Activated CD8-positive, alpha-beta T cell treated with anti-CD3 and anti-CD28 coated beads for 36 hours (primary cell): ENCODE measurements at regions of chr4 and their contacts with region 1.

Region 1: DNA sequence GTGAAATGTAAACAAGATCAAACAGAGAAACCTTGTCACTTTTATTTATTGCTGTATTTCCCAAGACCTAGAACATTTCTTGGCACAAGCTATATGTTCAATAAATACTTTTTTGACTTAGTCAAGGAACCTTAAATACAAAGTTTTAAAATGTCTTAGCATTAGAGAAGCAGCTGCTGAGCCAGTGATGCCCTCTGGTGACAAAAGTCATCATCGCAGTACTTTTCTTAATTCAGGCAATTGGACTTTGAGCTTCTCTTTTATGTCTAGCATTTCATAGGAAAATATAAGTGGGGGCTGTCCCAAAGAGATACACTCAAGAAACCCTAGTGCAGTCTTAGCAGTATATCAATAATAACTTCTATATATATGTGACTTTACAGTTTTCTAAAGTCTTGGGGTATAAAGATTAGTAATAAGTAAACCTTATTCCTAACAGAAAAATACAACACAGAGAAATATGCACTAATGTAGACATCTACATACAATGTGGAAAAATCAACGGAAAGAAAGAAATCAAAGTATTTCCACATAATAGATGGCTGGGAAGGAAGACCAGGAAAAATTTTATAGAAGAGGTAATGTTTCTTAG is 118.4 kb downstream of the DTHD1 start:
- DNase-seq: peak; percentile 74
- ATAC-seq: peak; percentile 76
- H3K4me3 Mint-ChIP-seq: no peak overlapping the region
- H3K27ac Mint-ChIP-seq: no peak overlapping the region
- H3K4me1 Mint-ChIP-seq: peaks cover 9% of the 10 kb centered on the region
- H3K27me3 Mint-ChIP-seq: peaks cover 5% of the 10 kb centered on the region
- CTCF ChIP-seq: peak; percentile 88

Region 2: GRCh38 chr4:36255577-36255976 is 144.3 kb before region 1 on chr4:
- CTCF ChIA-PET with region 1: interaction called, 23 read pairs
- POLR2A ChIA-PET with region 1: no interaction called
- intact Hi-C with region 1: no loop called
- DNase-seq: peak; percentile 81
- ATAC-seq: peak; percentile 80
- H3K4me3 Mint-ChIP-seq: peak overlapping the region; percentile 66
- H3K27ac Mint-ChIP-seq: peak overlapping the region; percentile 94
- H3K4me1 Mint-ChIP-seq: peaks cover 46% of the 10 kb centered on the region
- H3K27me3 Mint-ChIP-seq: no peaks in the 10 kb centered on the region
- CTCF ChIP-seq: no peak

Region 3: GRCh38 chr4:36343501-36344175 is 56.2 kb before region 1 on chr4:
- CTCF ChIA-PET with region 1: interaction called, 86 read pairs
- POLR2A ChIA-PET with region 1: interaction called, 5 read pairs
- intact Hi-C with region 1: no loop called
- DNase-seq: no peak
- ATAC-seq: no peak
- H3K4me3 Mint-ChIP-seq: no peak overlapping the region
- H3K27ac Mint-ChIP-seq: no peak overlapping the region
- H3K4me1 Mint-ChIP-seq: peaks cover 6% of the 10 kb centered on the region
- H3K27me3 Mint-ChIP-seq: no peaks in the 10 kb centered on the region
- CTCF ChIP-seq: no peak

Region 4: DNA sequence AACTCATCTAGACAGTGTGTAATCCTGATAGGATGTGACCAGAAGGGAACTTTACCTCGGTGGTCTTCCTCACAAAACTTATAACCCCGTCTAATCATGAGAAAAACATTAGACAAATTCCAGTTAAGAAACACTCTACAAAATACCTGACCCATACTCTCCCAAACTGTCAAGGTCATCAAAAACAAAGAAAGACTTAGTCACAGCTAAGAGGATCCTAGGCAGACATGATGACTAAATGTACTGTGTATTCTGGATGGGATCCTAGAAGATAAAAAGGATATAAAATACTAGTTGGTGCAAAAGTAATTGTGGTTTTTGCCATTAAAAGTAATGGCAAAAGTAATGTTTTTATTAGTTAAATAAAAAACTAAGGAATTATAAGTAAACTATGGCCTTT is 36.8 kb before region 1 on chr4:
- CTCF ChIA-PET with region 1: interaction called, 59 read pairs
- POLR2A ChIA-PET with region 1: no interaction called
- intact Hi-C with region 1: no loop called
- DNase-seq: no peak
- ATAC-seq: no peak
- H3K4me3 Mint-ChIP-seq: no peak overlapping the region
- H3K27ac Mint-ChIP-seq: no peak overlapping the region
- H3K4me1 Mint-ChIP-seq: no peaks in the 10 kb centered on the region
- H3K27me3 Mint-ChIP-seq: no peaks in the 10 kb centered on the region
- CTCF ChIP-seq: no peak

Region 5: DNA sequence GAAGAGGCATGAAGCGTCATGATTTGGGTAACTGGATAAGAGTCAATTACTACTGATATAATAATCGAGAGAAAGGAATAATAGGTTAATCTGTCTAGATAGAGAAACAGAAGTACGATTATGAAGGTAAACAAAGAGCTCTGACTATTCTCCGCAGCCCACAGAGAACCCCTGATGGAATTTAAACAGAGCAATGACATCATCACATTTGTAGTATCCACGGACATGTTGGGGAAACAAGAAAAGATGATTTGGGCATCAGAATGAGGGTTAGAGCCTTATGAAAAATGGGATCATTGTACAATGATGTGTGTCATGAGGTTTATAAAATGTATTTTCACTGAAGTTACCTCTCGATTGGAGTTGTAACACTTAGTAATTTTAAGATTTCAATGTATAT is 11.5 kb after region 1 on chr4:
- CTCF ChIA-PET with region 1: interaction called, 24 read pairs
- POLR2A ChIA-PET with region 1: no interaction called
- intact Hi-C with region 1: no loop called
- DNase-seq: no peak
- ATAC-seq: no peak
- H3K4me3 Mint-ChIP-seq: no peak overlapping the region
- H3K27ac Mint-ChIP-seq: no peak overlapping the region
- H3K4me1 Mint-ChIP-seq: no peaks in the 10 kb centered on the region
- H3K27me3 Mint-ChIP-seq: peaks cover 20% of the 10 kb centered on the region
- CTCF ChIP-seq: no peak